A673 (cell line): ENCODE measurements at regions of chr20 and their contacts with region 1.

Region 1: GRCh38 chr20:4427940-4428586 is 293.6 kb upstream of the PRND start:
- DNase-seq: no peak
- H3K4me3 ChIP-seq: no peak overlapping the region
- H3K27ac ChIP-seq: peak overlapping the region; percentile 22
- H3K4me1 ChIP-seq: peaks cover 14% of the 10 kb centered on the region
- H3K27me3 ChIP-seq: no peaks in the 10 kb centered on the region
- CTCF ChIP-seq: no peak

Region 2: GRCh38 chr20:4457566-4458543 is 29.8 kb after region 1 on chr20:
- CTCF ChIA-PET with region 1: no interaction called
- POLR2A ChIA-PET with region 1: no interaction called
- intact Hi-C with region 1: loop called (anchors 2 kb)
- DNase-seq: no peak
- H3K4me3 ChIP-seq: no peak overlapping the region
- H3K27ac ChIP-seq: no peak overlapping the region
- H3K4me1 ChIP-seq: no peaks in the 10 kb centered on the region
- H3K27me3 ChIP-seq: no peaks in the 10 kb centered on the region
- CTCF ChIP-seq: no peak